SK-N-SH (cell line): ENCODE measurements at regions of chr17 and their contacts with region 1.

Region 1: DNA sequence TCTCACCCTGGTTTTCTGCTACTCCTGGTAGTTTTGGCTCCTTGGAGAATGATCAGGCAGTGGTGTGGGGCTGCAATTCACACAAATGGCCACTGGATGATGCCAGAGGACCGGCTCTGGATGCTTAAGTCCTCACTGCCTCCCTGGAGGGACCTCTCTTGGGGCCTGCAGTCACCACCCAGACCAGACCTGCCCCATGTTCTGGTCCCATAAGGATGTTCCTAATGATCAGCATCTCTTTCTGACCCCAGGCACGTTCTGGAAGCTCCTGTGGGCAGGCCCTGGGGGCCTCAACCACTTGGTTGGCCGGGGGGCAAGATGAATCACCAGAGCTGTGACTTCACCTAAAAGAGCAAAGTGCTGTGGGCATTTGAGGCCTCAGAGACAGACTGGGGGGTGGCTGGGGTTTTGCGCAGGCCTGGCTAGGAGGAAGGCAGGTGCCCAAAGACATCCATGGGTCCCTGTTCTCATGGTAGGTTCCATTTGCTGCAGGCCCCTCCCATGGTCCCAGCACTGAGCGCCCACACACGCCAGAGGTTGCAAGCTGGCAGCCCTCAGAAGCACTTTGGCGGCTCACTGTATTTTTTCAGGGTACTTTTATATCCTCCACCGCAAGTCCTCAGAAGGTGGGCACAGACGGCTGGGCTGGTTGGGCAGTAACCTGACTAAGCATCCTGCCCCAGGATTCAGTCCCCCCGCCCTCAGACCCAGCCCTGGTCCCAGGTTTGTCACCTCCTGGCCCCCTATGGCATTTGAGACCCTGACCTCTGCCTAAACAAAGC is 53.2 kb downstream of the NT5M start:
- DNase-seq: peak; percentile 90
- H3K4me3 ChIP-seq: no peak overlapping the region; a peak in 1 of 4 replicates
- H3K27ac ChIP-seq: no peak overlapping the region
- H3K4me1 ChIP-seq: peaks cover 0 to 26% of the 10 kb centered on the region in 2 experiments; a peak in 1 of 4 replicates
- H3K27me3 ChIP-seq: no peaks in the 10 kb centered on the region
- CTCF ChIP-seq: peak; percentile 99
- EP300 ChIP-seq: no peak
- RAD21 ChIP-seq: peak; percentile 100

Region 2: GRCh38 chr17:17370711-17371110 is 14.4 kb after region 1 on chr17:
- CTCF ChIA-PET with region 1: interaction called, 44 read pairs
- POLR2A ChIA-PET with region 1: no interaction called
- DNase-seq: no peak
- H3K4me3 ChIP-seq: no peak overlapping the region
- H3K27ac ChIP-seq: no peak overlapping the region
- H3K4me1 ChIP-seq: no peaks in the 10 kb centered on the region
- H3K27me3 ChIP-seq: peaks cover 5% of the 10 kb centered on the region; the same call in 1 of the 2 replicates
- CTCF ChIP-seq: no peak
- EP300 ChIP-seq: no peak
- RAD21 ChIP-seq: no peak

Region 3: GRCh38 chr17:17506811-17507464 is 150.6 kb after region 1 on chr17:
- CTCF ChIA-PET with region 1: interaction called, 14 read pairs
- POLR2A ChIA-PET with region 1: no interaction called
- DNase-seq: peak; percentile 48
- H3K4me3 ChIP-seq: no peak overlapping the region
- H3K27ac ChIP-seq: no peak overlapping the region
- H3K4me1 ChIP-seq: peaks cover 2 to 21% of the 10 kb centered on the region in 2 experiments; a peak in 2 of 4 replicates
- H3K27me3 ChIP-seq: no peaks in the 10 kb centered on the region
- CTCF ChIP-seq: no peak
- EP300 ChIP-seq: no peak
- RAD21 ChIP-seq: no peak

Region 4: GRCh38 chr17:17575360-17576251 is 219.3 kb after region 1 on chr17:
- CTCF ChIA-PET with region 1: interaction called, 107 read pairs
- POLR2A ChIA-PET with region 1: no interaction called
- DNase-seq: no peak
- H3K4me3 ChIP-seq: no peak overlapping the region
- H3K27ac ChIP-seq: no peak overlapping the region
- H3K4me1 ChIP-seq: peaks cover 0 to 24% of the 10 kb centered on the region in 2 experiments; a peak in 1 of 4 replicates
- H3K27me3 ChIP-seq: no peaks in the 10 kb centered on the region
- CTCF ChIP-seq: no peak
- EP300 ChIP-seq: no peak
- RAD21 ChIP-seq: no peak

Region 5: GRCh38 chr17:17613708-17614114 is 257.4 kb after region 1 on chr17:
- CTCF ChIA-PET with region 1: interaction called, 29 read pairs
- POLR2A ChIA-PET with region 1: no interaction called
- DNase-seq: peak; percentile 70
- H3K4me3 ChIP-seq: no peak overlapping the region
- H3K27ac ChIP-seq: no peak overlapping the region
- H3K4me1 ChIP-seq: no peaks in the 10 kb centered on the region
- H3K27me3 ChIP-seq: no peaks in the 10 kb centered on the region
- CTCF ChIP-seq: peak; percentile 68
- EP300 ChIP-seq: no peak
- RAD21 ChIP-seq: peak; percentile 71

Region 6: GRCh38 chr17:17663160-17664063 is 307.1 kb after region 1 on chr17:
- CTCF ChIA-PET with region 1: interaction called, 10 read pairs
- POLR2A ChIA-PET with region 1: no interaction called
- DNase-seq: peak; percentile 92
- H3K4me3 ChIP-seq: no peak overlapping the region
- H3K27ac ChIP-seq: peak overlapping the region in 1 of 2 experiments; percentile 24; a peak in 2 of 4 replicates
- H3K4me1 ChIP-seq: peaks cover 0 to 12% of the 10 kb centered on the region in 2 experiments; a peak in 1 of 4 replicates
- H3K27me3 ChIP-seq: no peaks in the 10 kb centered on the region
- CTCF ChIP-seq: no peak
- EP300 ChIP-seq: no peak
- RAD21 ChIP-seq: no peak